PC-3 (cell line): ENCODE measurements at regions of chr1 and their contacts with region 1.

Region 1: GRCh38 chr1:169485544-169486278 is at the start of gene SLC19A2:
- DNase-seq: peak; percentile 100
- ATAC-seq: peak; percentile 94
- H3K4me3 ChIP-seq: peak within 1 kb of the TSS; percentile 76
- H3K27ac ChIP-seq: peak within 1 kb of the TSS; percentile 76
- H3K4me1 ChIP-seq: peaks cover 45% of the 10 kb centered on the region
- H3K27me3 ChIP-seq: no peaks in the 10 kb centered on the region
- CTCF ChIP-seq: peak; percentile 41; the same call in 1 of the 2 replicates
- total RNA-seq, gene SLC19A2: 8.6 and 11.0 TPM in 2 replicates

Region 2: GRCh38 chr1:169367486-169368405 is 118.0 kb before region 1 on chr1 and contains the starts of genes BLZF1 and NME7:
- CTCF ChIA-PET with region 1: no interaction called
- POLR2A ChIA-PET with region 1: interaction called, 5 read pairs
- intact Hi-C with region 1: loop called (anchors 5 kb)
- DNase-seq: peak; percentile 100
- ATAC-seq: peak; percentile 90
- H3K4me3 ChIP-seq: peak within 1 kb of the TSS; percentile 92
- H3K27ac ChIP-seq: peak within 1 kb of the TSS; percentile 87
- H3K4me1 ChIP-seq: peaks cover 46% of the 10 kb centered on the region
- H3K27me3 ChIP-seq: no peaks in the 10 kb centered on the region
- CTCF ChIP-seq: no peak
- total RNA-seq, gene BLZF1: 30.6 and 37.4 TPM in 2 replicates
- total RNA-seq, gene NME7: 18.6 and 18.9 TPM in 2 replicates

Region 3: DNA sequence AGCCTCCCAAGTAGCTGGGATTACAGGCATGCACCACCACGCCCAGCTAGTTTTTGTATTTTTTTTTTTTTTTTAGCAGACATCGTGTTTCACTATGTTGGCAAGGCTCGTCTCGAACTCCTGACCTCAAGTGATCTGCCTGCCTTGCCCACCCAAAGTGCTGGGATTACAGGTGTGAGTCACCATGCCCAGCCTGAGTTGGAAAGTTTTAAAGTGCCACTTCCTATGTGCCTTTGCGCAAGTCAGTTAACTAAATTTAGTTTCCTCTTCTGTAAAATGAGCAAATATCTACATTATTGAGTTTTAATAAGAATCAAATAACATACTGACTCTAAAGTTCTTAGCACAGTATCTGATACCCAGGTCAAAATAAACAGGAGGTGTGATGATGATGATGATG is 12.4 kb before region 1 on chr1:
- CTCF ChIA-PET with region 1: interaction called, 5 read pairs
- POLR2A ChIA-PET with region 1: no interaction called
- intact Hi-C with region 1: loop called (anchors 1 kb)
- DNase-seq: peak; percentile 33
- ATAC-seq: no peak; the same call in 1 of the 2 replicates
- H3K4me3 ChIP-seq: no peak overlapping the region
- H3K27ac ChIP-seq: peak overlapping the region; percentile 36; the same call in 1 of the 2 replicates
- H3K4me1 ChIP-seq: peaks cover 20% of the 10 kb centered on the region
- H3K27me3 ChIP-seq: no peaks in the 10 kb centered on the region
- CTCF ChIP-seq: no peak

Region 4: DNA sequence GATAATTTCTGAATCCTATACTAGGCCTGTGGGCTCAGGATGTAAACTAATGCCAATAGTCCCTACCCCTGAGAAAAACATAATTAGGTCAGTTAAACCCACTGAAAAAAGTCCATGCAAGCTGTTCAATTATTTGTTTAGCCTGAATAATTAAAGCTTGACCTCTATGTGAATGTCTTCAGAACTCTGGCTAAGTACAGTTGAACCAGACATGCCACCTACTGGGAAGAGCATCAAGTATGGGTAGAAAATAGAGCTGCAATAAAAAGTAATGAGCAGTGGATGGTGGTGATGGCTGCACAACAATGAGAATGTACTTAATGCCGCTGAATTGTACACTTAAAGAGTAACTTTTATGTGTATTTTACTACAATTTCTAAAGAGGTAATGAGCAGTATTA is 23.6 kb after region 1 on chr1:
- CTCF ChIA-PET with region 1: interaction called, 3 read pairs
- POLR2A ChIA-PET with region 1: interaction called, 3 read pairs
- intact Hi-C with region 1: loop called (anchors 1 kb)
- DNase-seq: no peak
- ATAC-seq: peak; percentile 35; the same call in 1 of the 2 replicates
- H3K4me3 ChIP-seq: no peak overlapping the region
- H3K27ac ChIP-seq: no peak overlapping the region
- H3K4me1 ChIP-seq: peaks cover 32% of the 10 kb centered on the region
- H3K27me3 ChIP-seq: no peaks in the 10 kb centered on the region
- CTCF ChIP-seq: peak; percentile 26

Region 5: DNA sequence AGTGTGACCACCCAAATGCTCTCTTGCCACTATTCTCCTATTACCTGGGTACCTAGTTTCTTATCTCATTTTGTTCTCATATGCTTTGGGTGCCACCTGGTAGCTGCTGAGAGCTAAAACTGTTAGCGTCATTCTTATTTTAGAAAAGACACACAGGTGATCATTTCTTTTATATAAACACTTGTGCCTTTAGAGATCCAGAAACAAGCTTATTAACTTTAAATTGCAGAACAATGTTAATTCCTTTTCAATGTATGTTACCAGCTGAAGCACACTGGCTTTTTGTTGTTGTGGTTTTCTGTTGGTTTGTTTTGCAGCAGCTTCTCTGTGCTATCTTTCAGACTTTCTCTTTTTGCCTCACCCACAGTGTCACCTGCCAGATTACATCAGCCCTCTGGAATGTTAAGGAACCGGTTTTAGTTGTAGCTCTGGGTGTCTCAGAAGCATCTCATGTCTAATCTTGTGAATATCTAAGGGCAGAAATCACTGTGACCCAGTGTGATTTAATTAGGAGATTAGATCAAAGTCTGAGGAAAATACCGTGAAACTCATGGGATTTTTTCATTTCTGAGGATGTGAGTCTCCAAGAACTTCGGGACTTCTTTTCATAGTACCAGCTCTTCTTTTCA is 43.5 kb after region 1 on chr1:
- CTCF ChIA-PET with region 1: no interaction called
- POLR2A ChIA-PET with region 1: interaction called, 6 read pairs
- intact Hi-C with region 1: loop called (anchors 1 kb)
- DNase-seq: peak; percentile 100
- ATAC-seq: peak; percentile 91
- H3K4me3 ChIP-seq: peak overlapping the region; percentile 47
- H3K27ac ChIP-seq: peak overlapping the region; percentile 26
- H3K4me1 ChIP-seq: peaks cover 45% of the 10 kb centered on the region
- H3K27me3 ChIP-seq: no peaks in the 10 kb centered on the region
- CTCF ChIP-seq: no peak

Region 6: DNA sequence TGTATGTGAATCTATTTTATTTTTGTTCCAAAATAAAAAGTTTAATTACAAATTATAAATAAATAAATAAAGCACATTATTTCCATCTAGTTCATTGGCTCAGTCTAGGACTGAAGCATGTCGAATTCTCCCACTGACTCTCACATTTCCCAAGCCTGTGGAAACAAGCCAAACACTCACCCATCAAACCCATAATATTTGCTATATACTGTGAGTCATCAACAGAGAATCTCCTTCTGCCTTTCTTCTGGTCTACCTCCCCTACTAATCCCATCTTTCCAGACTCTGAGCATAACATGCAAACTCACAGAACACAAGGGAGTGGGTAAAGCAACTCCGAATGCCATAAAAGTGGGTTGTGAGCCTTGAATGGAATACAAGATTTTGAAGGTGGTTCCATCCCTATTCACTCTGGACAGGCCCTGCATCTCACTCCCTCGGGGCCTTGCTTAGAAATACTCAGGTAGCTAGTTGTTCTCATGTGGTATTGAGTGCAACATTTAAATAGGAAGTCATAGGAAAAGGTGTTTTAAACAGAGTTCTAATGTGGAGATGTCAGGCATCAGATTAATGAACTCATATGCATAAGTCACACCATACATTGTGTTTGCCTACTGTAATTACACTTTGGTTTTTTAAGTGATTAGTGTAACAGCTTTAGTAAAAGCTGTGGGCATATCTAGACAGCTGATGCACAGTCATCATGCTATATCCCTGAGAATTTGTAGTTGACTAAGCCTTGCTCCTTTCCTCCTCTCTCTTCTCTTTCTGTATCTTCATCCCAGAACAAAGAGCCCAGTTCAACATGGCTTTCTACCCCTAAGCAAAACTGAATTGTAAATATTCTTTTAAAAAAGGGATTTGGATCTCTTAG is 53.5 kb after region 1 on chr1:
- CTCF ChIA-PET with region 1: no interaction called
- POLR2A ChIA-PET with region 1: no interaction called
- intact Hi-C with region 1: loop called (anchors 2 kb)
- DNase-seq: peak; percentile 99
- ATAC-seq: peak; percentile 100
- H3K4me3 ChIP-seq: no peak overlapping the region
- H3K27ac ChIP-seq: peak overlapping the region; percentile 15
- H3K4me1 ChIP-seq: peaks cover 15% of the 10 kb centered on the region
- H3K27me3 ChIP-seq: no peaks in the 10 kb centered on the region
- CTCF ChIP-seq: no peak

Region 7: GRCh38 chr1:169794530-169795416 is 309.1 kb after region 1 on chr1 and contains the start of gene METTL18:
- CTCF ChIA-PET with region 1: no interaction called
- POLR2A ChIA-PET with region 1: interaction called, 6 read pairs
- intact Hi-C with region 1: loop called (anchors 10 kb)
- DNase-seq: peak; percentile 98
- ATAC-seq: peak; percentile 98
- H3K4me3 ChIP-seq: peak within 1 kb of the TSS; percentile 83
- H3K27ac ChIP-seq: peak within 1 kb of the TSS; percentile 75
- H3K4me1 ChIP-seq: peaks cover 33% of the 10 kb centered on the region
- H3K27me3 ChIP-seq: no peaks in the 10 kb centered on the region
- CTCF ChIP-seq: no peak
- total RNA-seq, gene METTL18: 7.3 and 7.4 TPM in 2 replicates